ENCODE measurements at regions of chr1 and their contacts with region 1.

Region 1: DNA sequence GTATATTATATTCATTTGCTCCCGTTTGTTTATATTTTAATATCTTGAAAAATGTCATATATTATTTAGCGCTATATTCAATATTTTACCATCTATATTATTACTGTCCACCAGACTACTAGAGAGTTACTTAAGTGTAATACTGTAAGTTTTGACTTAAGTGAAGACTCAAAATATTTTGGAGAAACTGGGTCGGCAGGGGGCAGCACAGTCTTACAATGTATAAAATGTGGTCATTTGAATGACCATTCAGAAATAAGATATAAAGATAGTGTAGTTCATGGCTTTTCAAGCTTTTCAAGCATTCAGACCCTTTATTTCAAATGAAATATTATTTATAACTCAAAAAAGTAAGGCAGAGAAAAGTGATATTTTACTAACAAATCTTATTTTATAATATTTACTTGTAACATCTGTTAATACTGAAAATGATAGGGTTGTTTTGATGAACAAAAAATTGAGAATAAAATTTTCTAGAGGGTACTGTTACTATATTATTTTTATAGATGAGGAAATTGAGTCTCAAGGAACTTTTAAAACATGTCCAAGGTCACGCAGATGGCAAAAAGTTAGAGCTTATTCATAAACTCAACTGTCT is 89.0 kb upstream of the SERTAD4 start:
- DNase-seq: peak; percentile 77
- H3K4me3 ChIP-seq: no peak overlapping the region
- H3K27ac ChIP-seq: no peak overlapping the region
- H3K4me1 ChIP-seq: no peaks in the 10 kb centered on the region
- H3K27me3 ChIP-seq: no peaks in the 10 kb centered on the region
- CTCF ChIP-seq: peak; percentile 60 to 68 (median 64)
- EP300 ChIP-seq: no peak
- POLR2A ChIP-seq: no peak

Region 2: DNA sequence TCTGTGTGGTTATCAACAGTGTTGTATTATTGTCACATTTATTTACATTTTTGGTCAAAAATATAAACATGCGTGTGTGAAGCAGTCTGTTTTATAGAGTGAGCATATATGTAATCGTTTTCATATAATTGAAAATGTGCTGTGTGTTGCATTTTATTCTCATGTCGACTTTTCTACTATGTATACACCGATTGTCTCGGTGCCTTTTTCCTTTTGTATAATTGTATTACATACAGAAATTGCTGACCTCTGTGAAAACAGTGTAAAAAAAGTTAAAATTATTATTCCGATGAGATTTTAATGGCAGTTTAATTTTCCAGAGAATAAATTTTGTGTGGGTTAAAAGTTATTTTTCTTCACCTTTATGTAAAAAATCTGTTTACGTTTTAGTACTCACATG is 26.7 kb after region 1 on chr1:
- in situ Hi-C with region 1: no loop called
- intact Hi-C with region 1: no loop called
- DNase-seq: no peak
- H3K4me3 ChIP-seq: no peak overlapping the region
- H3K27ac ChIP-seq: no peak overlapping the region
- H3K4me1 ChIP-seq: no peaks in the 10 kb centered on the region
- H3K27me3 ChIP-seq: no peaks in the 10 kb centered on the region
- CTCF ChIP-seq: no peak
- EP300 ChIP-seq: no peak
- POLR2A ChIP-seq: no peak

Region 3: DNA sequence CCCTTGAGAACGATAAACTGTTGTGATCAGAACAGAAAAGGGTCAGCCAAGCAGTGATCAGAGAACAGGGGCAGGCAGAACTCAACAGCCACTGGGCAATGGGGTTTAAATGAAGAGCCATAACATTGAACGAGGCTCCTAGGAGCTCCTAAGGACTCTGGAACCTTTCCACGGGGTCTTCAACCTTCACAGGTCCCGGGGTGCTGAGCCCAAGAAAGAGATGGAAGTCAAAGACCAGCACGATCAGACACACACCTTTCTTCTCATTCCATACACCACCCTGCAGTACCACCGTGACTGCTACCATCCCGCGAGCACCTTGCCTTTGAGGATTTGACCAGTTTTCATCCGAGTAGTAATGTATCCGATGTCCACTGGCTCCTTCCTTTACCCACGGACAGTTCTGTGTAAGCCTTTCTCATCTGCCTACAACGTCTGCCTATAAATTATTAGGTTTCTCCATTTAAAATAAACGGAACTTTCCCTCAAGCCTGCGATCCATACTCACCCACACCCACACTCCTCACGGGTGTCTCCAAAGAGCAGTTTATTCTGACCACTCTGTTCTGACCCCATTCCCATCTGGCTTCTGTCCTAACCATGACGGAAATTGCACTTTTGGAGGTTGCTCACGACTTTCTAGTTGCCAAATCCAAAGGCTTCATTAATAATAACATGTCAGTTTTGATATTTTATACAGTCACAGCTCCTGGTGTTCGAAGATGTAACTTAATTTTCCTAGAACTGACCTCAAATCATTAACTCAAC is 168.3 kb after region 1 on chr1:
- in situ Hi-C with region 1: loop called (anchors 10 to 25 kb)
- intact Hi-C with region 1: loop called (anchors 5 kb)
- DNase-seq: no peak
- H3K4me3 ChIP-seq: no peak overlapping the region
- H3K27ac ChIP-seq: peak overlapping the region in 3 of 4 donors; percentile 24 to 52 (median 38)
- H3K4me1 ChIP-seq: peaks cover 0 to 10% (median 7%) of the 10 kb centered on the region in 4 donors
- H3K27me3 ChIP-seq: no peaks in the 10 kb centered on the region
- CTCF ChIP-seq: no peak
- EP300 ChIP-seq: no peak
- POLR2A ChIP-seq: no peak

Region 4: DNA sequence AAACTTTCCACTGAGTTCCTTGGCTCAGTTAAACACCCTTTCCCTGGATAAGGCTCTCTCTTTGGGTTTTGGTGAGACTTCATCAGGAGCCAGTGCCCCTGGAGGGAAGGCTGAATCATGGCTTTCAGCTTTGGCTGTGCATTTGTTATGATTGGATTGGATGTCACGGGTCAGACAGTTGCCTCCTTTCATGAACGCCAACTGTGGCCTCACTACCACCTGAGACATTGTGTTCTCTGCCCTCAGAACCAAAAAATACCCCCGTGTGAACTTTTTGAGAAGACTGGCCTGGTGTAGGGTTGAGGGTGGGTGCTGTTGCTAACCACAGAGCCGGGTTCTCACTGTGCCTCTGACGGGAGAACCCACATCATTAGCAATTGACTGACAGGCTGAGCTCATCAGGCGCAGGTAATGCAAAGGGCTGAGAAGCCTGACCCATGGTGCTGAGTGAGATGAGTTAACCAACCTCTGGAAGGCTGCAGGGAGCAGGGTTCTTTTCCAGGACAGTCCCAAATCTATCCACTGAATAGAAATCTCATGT is 250.8 kb after region 1 on chr1:
- in situ Hi-C with region 1: loop called in 1 of 4 experiments (anchors 10 kb)
- intact Hi-C with region 1: no loop called
- DNase-seq: no peak
- H3K4me3 ChIP-seq: no peak overlapping the region
- H3K27ac ChIP-seq: no peak overlapping the region
- H3K4me1 ChIP-seq: no peaks in the 10 kb centered on the region
- H3K27me3 ChIP-seq: no peaks in the 10 kb centered on the region
- CTCF ChIP-seq: no peak
- EP300 ChIP-seq: no peak
- POLR2A ChIP-seq: no peak